ENCODE measurements at regions of chr20 and their contacts with region 1.

Region 1: DNA sequence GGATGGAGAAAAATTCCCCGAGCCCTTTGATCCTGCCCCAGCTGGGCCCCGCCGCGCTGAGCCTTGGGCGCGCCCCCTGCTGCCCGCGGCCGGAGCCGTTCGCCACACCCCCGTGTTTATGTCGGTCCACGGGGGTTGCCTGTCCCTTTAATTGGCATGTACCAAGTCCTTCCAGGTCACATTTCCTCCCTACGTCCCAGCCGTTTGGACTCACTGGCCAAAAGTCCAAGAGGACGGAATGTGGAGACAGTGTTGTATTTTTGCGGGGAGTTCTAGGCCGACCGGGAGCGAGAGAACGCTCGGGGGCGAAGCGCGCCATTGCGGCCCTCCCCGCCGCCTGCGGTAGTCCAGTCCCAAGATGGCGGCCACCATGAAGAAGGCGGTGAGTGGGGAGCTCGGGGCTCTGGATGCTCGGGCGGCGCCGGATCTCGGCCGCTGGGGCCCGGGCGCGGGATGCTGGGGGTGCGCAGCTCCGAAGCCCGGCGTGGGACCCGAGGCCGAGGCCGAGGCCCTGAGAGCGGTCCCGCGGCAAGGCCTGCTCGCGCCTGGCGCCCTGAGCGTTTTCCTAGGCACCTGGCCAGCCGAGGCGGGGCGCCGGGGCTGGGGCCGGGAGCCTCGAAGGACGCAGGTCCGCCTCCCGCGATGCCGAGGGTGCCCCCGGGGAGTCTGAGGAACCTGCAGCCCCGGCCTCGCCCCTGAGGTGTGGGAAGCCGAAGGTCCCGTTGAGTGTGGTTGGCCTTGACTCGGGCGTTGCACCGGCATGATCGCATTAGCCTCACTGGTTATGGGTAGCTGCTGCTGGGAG is at the start of gene PFDN4:
- DNase-seq: peak; percentile 64
- ATAC-seq: peak; percentile 96
- H3K4me3 ChIP-seq: peak within 1 kb of the TSS; percentile 91
- H3K27ac ChIP-seq: peak within 1 kb of the TSS; percentile 100
- H3K4me1 ChIP-seq: peaks cover 14% of the 10 kb centered on the region
- H3K27me3 ChIP-seq: no peaks in the 10 kb centered on the region
- CTCF ChIP-seq: peak; percentile 85 to 94 (median 92)
- EP300 ChIP-seq: 0 out of 4 replicates have a peak, but pooled peaks have one; percentile 11 to 13
- POLR2A ChIP-seq: peak; percentile 77
- RAD21 ChIP-seq: peak; percentile 30; the same call in 1 of the 2 replicates
- polyA plus RNA-seq, gene PFDN4: 121 to 123 TPM

Region 2: DNA sequence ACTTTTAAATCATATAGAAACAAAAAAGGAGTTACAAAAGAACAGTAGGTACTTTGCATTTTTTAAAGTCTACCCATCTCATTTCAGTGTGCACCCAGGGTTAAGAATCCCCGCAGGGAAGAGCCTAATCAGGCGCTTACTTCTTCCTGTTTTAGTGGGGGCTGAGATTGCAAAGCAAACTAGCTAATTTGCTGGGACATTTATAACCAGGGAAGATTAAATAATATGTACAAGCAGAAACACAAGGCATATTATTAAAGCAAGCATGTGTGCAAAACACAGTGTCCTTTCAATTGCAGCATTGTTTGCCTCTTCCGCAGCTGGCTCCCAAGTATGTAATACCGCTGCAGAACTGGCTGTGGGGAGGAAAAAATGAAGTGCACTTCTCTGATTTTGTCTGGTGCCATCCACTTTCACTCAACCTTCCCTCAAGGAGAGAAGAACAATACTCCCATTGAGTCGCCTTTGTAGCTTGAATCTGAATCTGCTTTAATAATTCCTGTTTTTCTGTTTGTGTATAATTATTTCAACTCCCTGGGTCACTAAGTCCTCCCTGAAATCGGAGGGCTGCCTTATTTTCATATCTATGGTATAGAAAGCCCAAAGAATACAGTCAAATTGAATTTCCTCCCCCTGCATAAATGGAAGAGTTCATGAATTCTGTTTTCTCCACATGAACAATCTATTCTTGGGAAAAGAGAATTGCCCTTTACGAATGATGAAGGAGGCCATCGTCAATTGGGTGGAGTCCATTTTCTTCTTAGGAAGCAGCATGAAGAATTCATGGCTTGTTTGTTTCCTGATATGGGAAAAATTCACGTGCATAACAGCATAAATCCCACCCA is 114.3 kb before region 1 on chr20:
- CTCF ChIA-PET with region 1: interaction called, 153 read pairs
- POLR2A ChIA-PET with region 1: no interaction called
- RAD21 ChIA-PET with region 1: no interaction called
- SMC1A ChIA-PET with region 1: interaction called, 14 read pairs
- in situ Hi-C with region 1: no loop called
- intact Hi-C with region 1: no loop called
- DNase-seq: no peak
- ATAC-seq: no peak
- H3K4me3 ChIP-seq: no peak overlapping the region
- H3K27ac ChIP-seq: no peak overlapping the region
- H3K4me1 ChIP-seq: peaks cover 8% of the 10 kb centered on the region
- H3K27me3 ChIP-seq: no peaks in the 10 kb centered on the region
- CTCF ChIP-seq: no peak
- EP300 ChIP-seq: no peak
- POLR2A ChIP-seq: no peak
- RAD21 ChIP-seq: no peak

Region 3: DNA sequence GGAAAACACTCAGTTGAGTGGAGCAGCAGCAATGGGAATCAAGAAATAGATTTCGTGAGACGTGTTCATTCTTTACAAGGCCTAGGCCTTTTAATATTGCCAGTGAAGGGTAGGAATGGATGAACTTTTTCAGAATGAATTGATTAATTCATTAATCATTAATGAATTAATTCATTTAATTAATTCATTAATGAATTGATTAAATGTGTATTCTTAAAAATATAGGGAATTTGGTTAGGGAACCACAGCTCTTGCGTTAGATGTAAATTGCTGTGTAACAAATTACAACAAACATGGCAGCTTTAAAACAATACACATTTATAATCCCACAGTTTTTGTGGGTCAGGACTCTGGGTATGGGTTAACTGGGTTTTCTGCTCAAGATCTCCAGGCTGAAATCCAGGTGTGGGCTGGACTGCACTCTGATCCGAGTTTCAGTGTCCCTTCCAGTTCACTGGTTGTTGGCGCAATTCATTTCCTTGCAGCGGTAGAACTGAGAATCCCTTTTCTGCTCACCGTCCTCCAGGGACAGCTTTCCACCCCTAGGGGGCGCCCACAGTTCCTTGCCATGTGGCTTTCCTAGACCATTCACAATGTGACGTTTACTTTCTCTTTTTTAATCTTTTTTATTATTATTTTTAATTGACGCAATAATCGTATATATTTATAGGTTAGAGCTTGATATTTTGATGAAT is 104.7 kb before region 1 on chr20:
- CTCF ChIA-PET with region 1: interaction called, 153 read pairs
- POLR2A ChIA-PET with region 1: no interaction called
- RAD21 ChIA-PET with region 1: interaction called, 3 read pairs
- SMC1A ChIA-PET with region 1: interaction called, 7 read pairs
- in situ Hi-C with region 1: no loop called
- intact Hi-C with region 1: no loop called
- DNase-seq: no peak
- ATAC-seq: peak; percentile 97
- H3K4me3 ChIP-seq: no peak overlapping the region
- H3K27ac ChIP-seq: no peak overlapping the region
- H3K4me1 ChIP-seq: no peaks in the 10 kb centered on the region
- H3K27me3 ChIP-seq: no peaks in the 10 kb centered on the region
- CTCF ChIP-seq: peak; percentile 80 to 90 (median 90)
- EP300 ChIP-seq: no peak
- POLR2A ChIP-seq: no peak
- RAD21 ChIP-seq: peak; percentile 61

Region 4: GRCh38 chr20:54189630-54190029 is 18.3 kb before region 1 on chr20:
- CTCF ChIA-PET with region 1: no interaction called
- POLR2A ChIA-PET with region 1: no interaction called
- RAD21 ChIA-PET with region 1: no interaction called
- SMC1A ChIA-PET with region 1: no interaction called
- in situ Hi-C with region 1: no loop called
- intact Hi-C with region 1: no loop called
- DNase-seq: no peak
- ATAC-seq: no peak
- H3K4me3 ChIP-seq: no peak overlapping the region
- H3K27ac ChIP-seq: no peak overlapping the region
- H3K4me1 ChIP-seq: no peaks in the 10 kb centered on the region; the same call in 1 of the 2 replicates
- H3K27me3 ChIP-seq: no peaks in the 10 kb centered on the region; a peak in 1 of 4 replicates
- CTCF ChIP-seq: no peak
- EP300 ChIP-seq: no peak
- POLR2A ChIP-seq: no peak
- RAD21 ChIP-seq: no peak

Region 5: GRCh38 chr20:54219751-54220426 is 11.9 kb after region 1 on chr20:
- CTCF ChIA-PET with region 1: interaction called, 14 read pairs
- POLR2A ChIA-PET with region 1: no interaction called
- RAD21 ChIA-PET with region 1: no interaction called
- SMC1A ChIA-PET with region 1: interaction called, 8 read pairs
- in situ Hi-C with region 1: no loop called
- intact Hi-C with region 1: no loop called
- DNase-seq: no peak
- ATAC-seq: no peak
- H3K4me3 ChIP-seq: no peak overlapping the region
- H3K27ac ChIP-seq: no peak overlapping the region
- H3K4me1 ChIP-seq: no peaks in the 10 kb centered on the region
- H3K27me3 ChIP-seq: no peaks in the 10 kb centered on the region
- CTCF ChIP-seq: peak; percentile 25 to 44 (median 29); a peak in 4 of 6 replicates
- EP300 ChIP-seq: no peak
- POLR2A ChIP-seq: no peak
- RAD21 ChIP-seq: peak; percentile 50